Activated T-helper 1 cell treated with anti-CD3 and anti-CD28 coated beads, Interleukin-12 subunit alpha, Interleukin-12 subunit beta, Interleukin-2, Interleukin-4 antibody, amounts not matched to agents 30 ng/mL and 10 ng/mL and 1 ng/mL, durations not matched to agents 14 hours and 24 hours and 36 hours (primary cell): ENCODE measurements at regions of chr7 and their contacts with region 1.

Region 1: DNA sequence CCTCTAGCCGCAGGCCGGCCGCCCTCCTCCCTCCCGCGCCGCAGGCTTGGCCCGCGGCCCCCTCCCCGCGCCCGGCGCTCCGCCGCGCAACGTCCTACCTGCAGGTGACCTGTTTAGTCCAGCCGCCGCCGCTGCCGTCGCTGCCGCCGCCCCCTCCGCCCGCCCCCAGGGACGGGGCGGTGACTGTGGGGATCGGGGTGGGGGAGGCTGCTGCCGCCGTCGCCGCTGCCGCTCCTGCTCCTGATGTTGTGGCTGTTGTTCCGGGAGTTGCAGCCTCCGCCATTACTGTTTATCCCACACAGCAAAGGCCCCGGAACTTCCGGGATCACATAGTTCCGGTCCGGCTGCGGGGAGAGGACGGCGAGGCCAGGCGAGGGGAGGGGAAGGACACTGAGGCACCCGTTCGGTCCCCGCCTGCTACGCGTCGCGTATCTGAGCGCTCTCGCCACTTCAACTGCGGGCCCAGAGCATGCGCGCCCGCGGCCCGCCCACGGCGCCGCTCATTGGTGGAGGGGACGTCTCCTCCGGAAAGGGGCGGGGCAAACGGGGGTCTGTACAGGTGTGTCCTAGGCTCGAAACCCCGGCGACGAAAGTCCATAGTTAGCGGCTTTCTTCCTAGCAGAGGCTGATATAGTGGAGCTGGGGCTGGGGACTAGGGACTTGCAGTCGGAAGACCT is at the start of gene MKRN1:
- DNase-seq: peak; percentile 90
- H3K4me3 Mint-ChIP-seq: peak within 1 kb of the TSS; percentile 99
- H3K27ac Mint-ChIP-seq: peak within 1 kb of the TSS; percentile 99
- H3K4me1 Mint-ChIP-seq: peaks cover 29% of the 10 kb centered on the region
- H3K27me3 Mint-ChIP-seq: peaks cover 8% of the 10 kb centered on the region
- total RNA-seq, gene MKRN1: 61.7 and 72.2 TPM in 2 replicates

Region 2: DNA sequence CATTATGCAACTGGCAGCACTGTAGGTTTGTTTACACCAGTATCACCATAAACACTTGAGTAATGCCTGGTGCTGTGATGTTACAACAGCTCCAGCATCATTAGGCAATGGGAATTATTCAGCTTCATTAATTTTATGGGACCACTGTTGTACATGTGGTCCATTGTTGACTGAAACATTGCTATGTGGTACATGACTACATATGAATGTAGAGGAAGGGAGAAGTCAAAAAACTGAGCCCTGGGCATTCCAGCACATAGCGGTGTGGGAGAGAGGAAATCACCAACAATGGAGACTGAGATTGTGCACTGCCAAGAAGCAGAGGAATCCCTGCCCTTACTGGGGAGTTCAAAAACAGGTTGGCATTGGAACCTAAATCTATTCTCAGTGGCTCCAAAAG is 1930.1 kb before region 1 on chr7:
- intact Hi-C with region 1: no loop called
- DNase-seq: no peak
- H3K4me3 Mint-ChIP-seq: no peak overlapping the region
- H3K27ac Mint-ChIP-seq: no peak overlapping the region
- H3K4me1 Mint-ChIP-seq: peaks cover 10% of the 10 kb centered on the region
- H3K27me3 Mint-ChIP-seq: no peaks in the 10 kb centered on the region

Region 3: DNA sequence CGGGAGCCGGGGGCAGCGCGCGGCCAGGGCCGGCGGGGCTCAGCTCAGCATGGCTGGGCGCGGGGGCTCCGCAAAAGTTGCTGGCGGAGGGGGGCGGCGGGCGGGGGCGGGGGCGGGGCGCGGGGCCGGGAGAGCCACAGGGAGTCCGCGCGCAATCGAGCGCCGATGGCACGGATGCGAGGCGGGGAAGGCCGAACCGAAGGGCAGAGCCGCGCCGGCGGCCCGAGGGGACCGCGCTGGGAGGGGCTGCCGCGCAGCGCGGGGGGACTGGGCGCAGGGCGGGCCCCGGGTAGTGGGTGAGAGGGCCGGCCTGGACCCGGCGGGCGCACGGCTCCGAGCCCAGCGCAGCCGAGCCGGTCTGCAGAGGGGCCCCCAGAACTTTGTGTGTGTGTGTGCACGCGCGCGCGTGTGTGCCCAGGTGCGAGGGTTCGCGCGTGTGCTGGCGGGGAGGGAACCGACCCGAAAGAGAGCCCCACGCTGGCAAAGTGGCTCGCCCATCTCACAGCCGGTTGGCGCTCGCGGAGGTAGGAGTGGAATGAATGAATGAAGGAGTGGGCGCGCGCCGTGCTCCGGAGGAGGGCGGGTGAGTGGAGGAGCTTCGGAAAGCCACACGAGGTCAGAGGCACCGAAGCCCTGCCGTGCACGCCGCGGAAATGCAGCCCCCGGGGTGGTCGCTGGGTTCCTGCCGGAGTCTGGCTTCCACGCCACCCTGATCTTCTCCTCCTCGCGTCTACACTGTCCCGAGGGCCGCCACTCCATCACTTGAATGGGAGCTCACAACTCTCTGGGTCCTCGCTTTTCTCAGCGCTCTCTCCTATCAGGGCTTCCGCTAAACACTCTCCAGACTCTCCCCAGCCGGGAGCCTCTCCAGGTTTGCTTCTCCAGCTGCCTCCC is 701.0 kb before region 1 on chr7 and contains the start of gene HIPK2:
- intact Hi-C with region 1: loop called (anchors 5 kb)
- DNase-seq: peak; percentile 65
- H3K4me3 Mint-ChIP-seq: peak within 1 kb of the TSS; percentile 99
- H3K27ac Mint-ChIP-seq: peak within 1 kb of the TSS; percentile 98
- H3K4me1 Mint-ChIP-seq: peaks cover 48% of the 10 kb centered on the region
- H3K27me3 Mint-ChIP-seq: peaks cover 15% of the 10 kb centered on the region
- total RNA-seq, gene HIPK2: 28.3 and 29.2 TPM in 2 replicates

Region 4: GRCh38 chr7:140230861-140231770 is 248.1 kb before region 1 on chr7:
- intact Hi-C with region 1: loop called (anchors 5 kb)
- DNase-seq: peak; percentile 45
- H3K4me3 Mint-ChIP-seq: peak overlapping the region; percentile 91
- H3K27ac Mint-ChIP-seq: peak overlapping the region; percentile 94
- H3K4me1 Mint-ChIP-seq: peaks cover 46% of the 10 kb centered on the region
- H3K27me3 Mint-ChIP-seq: no peaks in the 10 kb centered on the region

Region 5: DNA sequence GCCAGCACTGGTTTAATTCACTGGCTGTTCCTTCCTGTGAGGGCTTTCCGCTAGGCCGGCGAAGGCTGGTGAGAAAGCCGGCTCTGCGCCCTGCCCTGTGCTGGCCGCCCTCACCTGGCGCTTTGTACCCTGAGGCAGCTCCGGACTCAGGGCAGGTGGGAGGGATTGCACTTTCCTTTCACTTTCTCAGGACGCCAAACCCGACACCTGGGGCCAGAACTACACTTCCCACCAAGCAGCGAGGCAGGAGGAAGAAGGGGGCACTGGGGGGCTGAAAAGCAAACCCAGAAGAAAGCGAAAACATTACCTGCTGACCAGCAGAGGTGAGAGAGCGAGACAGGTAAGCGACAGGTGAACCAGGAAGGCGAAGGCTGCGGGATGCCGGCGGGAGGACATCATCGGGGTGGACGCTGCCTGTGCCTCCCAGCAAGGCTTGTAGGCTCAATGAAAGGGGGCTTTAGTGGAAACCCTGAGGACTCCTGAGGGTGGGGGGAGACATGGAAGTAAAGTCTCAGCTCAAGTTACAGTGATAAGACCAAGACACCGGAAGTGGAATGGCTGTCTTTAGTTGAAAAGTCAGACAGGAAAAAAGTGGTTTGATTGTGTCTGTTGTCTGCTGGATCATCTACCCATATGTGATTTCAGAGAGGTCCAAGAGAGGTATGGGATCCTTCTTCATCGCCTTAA is 75.2 kb before region 1 on chr7 and contains the start of gene RAB19:
- intact Hi-C with region 1: loop called (anchors 1 kb)
- DNase-seq: peak; percentile 26
- H3K4me3 Mint-ChIP-seq: peak within 1 kb of the TSS; percentile 95
- H3K27ac Mint-ChIP-seq: peak within 1 kb of the TSS; percentile 90
- H3K4me1 Mint-ChIP-seq: peaks cover 49% of the 10 kb centered on the region
- H3K27me3 Mint-ChIP-seq: no peaks in the 10 kb centered on the region
- total RNA-seq, gene RAB19: 23.9 and 27.0 TPM in 2 replicates

Region 6: DNA sequence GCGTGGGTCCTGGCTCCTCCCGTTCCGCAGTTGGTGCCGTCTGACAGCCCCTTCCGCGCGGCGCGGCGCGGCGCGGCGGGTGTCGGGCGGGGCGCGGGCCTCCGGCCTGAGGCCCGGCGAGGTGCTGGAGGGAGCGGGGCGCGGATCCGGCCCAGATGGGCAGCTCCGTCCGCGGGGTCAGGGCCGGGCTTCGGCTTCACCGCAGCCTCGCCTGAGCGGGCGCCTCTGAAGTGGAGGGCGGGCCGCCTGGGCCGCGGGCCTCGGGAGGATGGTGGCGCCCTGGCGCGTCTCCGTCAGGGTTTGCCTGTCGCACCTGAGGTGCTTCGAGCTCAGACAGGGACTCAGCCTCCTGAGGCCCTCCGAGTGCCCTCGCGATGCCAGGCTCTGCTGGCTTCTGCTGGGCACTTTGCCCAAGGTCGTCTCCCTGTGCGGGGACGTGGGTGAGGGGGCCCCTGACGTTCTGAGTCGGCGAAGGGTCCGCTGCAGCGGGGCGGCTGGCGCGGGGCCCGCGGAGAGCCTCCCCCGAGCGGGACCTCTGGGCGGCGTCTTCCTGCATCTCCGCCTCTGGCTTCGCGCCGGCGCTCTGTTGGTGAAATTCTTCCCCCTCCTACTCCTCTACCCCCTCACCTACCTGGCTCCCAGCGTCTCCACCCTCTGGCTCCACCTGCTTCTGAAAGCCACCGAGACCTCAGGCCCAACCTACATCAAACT is 194.0 kb after region 1 on chr7:
- intact Hi-C with region 1: loop called (anchors 5 kb)
- DNase-seq: peak; percentile 56
- H3K4me3 Mint-ChIP-seq: peak overlapping the region; percentile 88
- H3K27ac Mint-ChIP-seq: peak overlapping the region; percentile 89
- H3K4me1 Mint-ChIP-seq: peaks cover 27% of the 10 kb centered on the region
- H3K27me3 Mint-ChIP-seq: peaks cover 2% of the 10 kb centered on the region

Region 7: DNA sequence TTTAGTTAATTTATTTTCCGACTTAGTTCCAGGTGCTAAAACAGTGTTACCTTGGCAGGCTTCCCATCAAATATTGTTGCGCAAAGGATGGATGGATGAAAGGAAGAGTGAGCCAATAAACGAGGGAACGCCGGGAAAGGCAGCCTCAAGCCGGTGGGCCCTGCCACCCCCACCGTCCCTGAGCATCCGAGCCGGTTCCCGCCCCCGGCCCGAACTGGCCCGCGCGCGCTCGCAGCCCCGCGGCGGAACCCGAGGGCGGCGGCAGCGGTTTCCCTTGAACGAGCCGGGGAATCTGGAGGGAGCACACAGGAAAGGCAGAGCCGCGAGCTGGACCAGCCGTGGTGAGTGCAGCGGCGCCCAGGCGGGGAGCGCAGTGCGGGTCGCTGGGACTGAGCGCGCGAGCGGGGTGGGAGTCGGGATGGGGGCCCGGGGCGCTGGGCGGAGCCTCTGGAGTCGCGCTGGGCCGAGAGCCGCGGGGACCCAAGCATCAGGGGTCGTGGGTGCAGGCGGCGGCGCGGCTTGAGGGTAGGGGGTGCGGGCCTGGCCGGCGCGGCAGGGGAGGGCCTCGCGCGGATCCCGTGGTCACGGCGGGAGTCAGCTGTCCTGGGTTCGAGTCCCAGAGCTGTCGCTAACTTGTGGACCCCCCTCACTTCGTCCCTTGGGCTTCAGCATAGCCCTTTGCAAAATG is 1072.0 kb after region 1 on chr7 and contains the start of gene AGK:
- intact Hi-C with region 1: loop called (anchors 10 kb)
- DNase-seq: peak; percentile 79
- H3K4me3 Mint-ChIP-seq: peak within 1 kb of the TSS; percentile 91
- H3K27ac Mint-ChIP-seq: peak within 1 kb of the TSS; percentile 97
- H3K4me1 Mint-ChIP-seq: peaks cover 50% of the 10 kb centered on the region
- H3K27me3 Mint-ChIP-seq: no peaks in the 10 kb centered on the region
- total RNA-seq, gene AGK: 174 and 179 TPM in 2 replicates